Activated CD4-positive, alpha-beta T cell treated with anti-CD3 and anti-CD28 coated beads, Interleukin-2, amount 10 ng/mL, durations not matched to agents 24 days and 14 days (primary cell): ENCODE measurements at regions of chr1 and their contacts with region 1.

Region 1: GRCh38 chr1:228500901-228501871 is 14.0 kb downstream of the RNF187 start:
- DNase-seq: peak; percentile 95
- H3K4me3 Mint-ChIP-seq: peak overlapping the region; percentile 77
- H3K27ac Mint-ChIP-seq: peak overlapping the region; percentile 42
- H3K4me1 Mint-ChIP-seq: peaks cover 20% of the 10 kb centered on the region
- H3K27me3 Mint-ChIP-seq: no peaks in the 10 kb centered on the region

Region 2: GRCh38 chr1:227946624-227947385 is 554.4 kb before region 1 on chr1:
- intact Hi-C with region 1: loop called (anchors 5 kb)
- DNase-seq: peak; percentile 87
- H3K4me3 Mint-ChIP-seq: peak overlapping the region; percentile 75
- H3K27ac Mint-ChIP-seq: no peak overlapping the region
- H3K4me1 Mint-ChIP-seq: no peaks in the 10 kb centered on the region
- H3K27me3 Mint-ChIP-seq: peaks cover 30% of the 10 kb centered on the region

Region 3: GRCh38 chr1:228275739-228276421 is 225.3 kb before region 1 on chr1:
- intact Hi-C with region 1: loop called (anchors 5 kb)
- DNase-seq: peak; percentile 96
- H3K4me3 Mint-ChIP-seq: peak overlapping the region; percentile 80
- H3K27ac Mint-ChIP-seq: peak overlapping the region; percentile 34
- H3K4me1 Mint-ChIP-seq: peaks cover 6% of the 10 kb centered on the region
- H3K27me3 Mint-ChIP-seq: no peaks in the 10 kb centered on the region

Region 4: GRCh38 chr1:228378090-228378872 is 122.9 kb before region 1 on chr1:
- intact Hi-C with region 1: loop called (anchors 5 kb)
- DNase-seq: peak; percentile 89
- H3K4me3 Mint-ChIP-seq: peak overlapping the region; percentile 91
- H3K27ac Mint-ChIP-seq: no peak overlapping the region
- H3K4me1 Mint-ChIP-seq: peaks cover 6% of the 10 kb centered on the region
- H3K27me3 Mint-ChIP-seq: peaks cover 34% of the 10 kb centered on the region

Region 5: DNA sequence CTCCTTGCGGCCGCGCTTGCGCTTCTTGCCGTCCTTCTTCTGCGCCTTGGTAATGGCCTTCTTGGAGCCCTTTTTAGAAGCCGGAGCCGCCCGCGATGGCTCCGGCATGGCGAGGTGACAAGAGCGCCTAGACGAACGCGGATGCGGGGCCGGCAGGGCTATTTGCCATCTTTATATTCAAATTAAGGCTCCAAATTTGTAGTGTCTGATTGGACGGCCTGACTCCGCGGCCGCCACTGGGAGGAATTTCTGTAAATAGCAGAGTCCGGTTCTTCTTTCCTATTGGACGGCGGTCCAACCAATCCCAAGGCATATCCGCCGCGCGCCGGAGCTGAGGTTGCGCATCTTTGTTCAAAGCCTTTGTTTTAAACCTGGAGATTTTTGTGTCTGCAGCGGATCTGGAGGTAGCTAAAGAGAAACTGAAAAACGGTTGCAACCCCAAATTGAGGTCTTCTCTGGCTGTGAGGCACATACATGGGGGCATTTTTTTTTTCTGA is 36.7 kb before region 1 on chr1:
- intact Hi-C with region 1: loop called (anchors 1 kb)
- DNase-seq: peak; percentile 97
- H3K4me3 Mint-ChIP-seq: peak overlapping the region; percentile 87
- H3K27ac Mint-ChIP-seq: peak overlapping the region; percentile 88
- H3K4me1 Mint-ChIP-seq: peaks cover 50% of the 10 kb centered on the region
- H3K27me3 Mint-ChIP-seq: peaks cover 12% of the 10 kb centered on the region

Region 6: GRCh38 chr1:228486596-228487335 is 14.4 kb before region 1 on chr1:
- intact Hi-C with region 1: loop called (anchors 1 kb)
- DNase-seq: peak; percentile 93
- H3K4me3 Mint-ChIP-seq: peak overlapping the region; percentile 93
- H3K27ac Mint-ChIP-seq: peak overlapping the region; percentile 99
- H3K4me1 Mint-ChIP-seq: peaks cover 39% of the 10 kb centered on the region
- H3K27me3 Mint-ChIP-seq: no peaks in the 10 kb centered on the region

Region 7: DNA sequence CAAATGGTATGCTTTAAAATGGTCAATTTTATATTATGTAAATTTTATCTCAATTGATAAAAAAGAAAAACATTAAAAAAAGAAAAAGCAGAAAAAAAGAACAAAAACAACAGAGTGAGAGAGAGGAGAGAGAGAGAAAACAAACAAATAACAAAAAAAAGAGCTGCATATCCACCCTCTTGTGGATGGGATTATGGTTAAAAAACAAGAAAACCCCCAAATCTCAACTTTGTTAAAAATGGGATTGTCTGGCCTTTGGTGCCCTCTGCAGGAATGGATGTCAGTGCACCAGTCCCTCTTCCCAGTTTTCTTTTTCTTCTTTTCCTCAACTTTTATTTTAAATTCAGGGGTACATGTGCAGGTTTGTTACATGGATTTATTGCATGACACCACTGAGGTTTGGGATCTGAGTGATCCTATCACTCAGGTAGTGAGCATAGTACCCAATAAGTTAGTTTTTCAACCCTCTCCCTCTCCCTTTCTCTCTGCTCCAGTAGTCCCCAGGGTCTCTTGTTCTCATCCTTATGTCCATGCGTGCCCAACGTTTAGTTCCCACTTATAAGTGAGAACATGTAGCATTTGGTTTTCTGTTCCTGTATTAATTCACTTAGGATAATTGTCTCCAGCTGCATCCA is 14.1 kb after region 1 on chr1:
- intact Hi-C with region 1: loop called (anchors 2 kb)
- DNase-seq: peak; percentile 80
- H3K4me3 Mint-ChIP-seq: no peak overlapping the region
- H3K27ac Mint-ChIP-seq: no peak overlapping the region
- H3K4me1 Mint-ChIP-seq: peaks cover 13% of the 10 kb centered on the region
- H3K27me3 Mint-ChIP-seq: peaks cover 51% of the 10 kb centered on the region